Mammary epithelial cell (primary cell): ENCODE measurements at regions of chr4 and their contacts with region 1.

Region 1: DNA sequence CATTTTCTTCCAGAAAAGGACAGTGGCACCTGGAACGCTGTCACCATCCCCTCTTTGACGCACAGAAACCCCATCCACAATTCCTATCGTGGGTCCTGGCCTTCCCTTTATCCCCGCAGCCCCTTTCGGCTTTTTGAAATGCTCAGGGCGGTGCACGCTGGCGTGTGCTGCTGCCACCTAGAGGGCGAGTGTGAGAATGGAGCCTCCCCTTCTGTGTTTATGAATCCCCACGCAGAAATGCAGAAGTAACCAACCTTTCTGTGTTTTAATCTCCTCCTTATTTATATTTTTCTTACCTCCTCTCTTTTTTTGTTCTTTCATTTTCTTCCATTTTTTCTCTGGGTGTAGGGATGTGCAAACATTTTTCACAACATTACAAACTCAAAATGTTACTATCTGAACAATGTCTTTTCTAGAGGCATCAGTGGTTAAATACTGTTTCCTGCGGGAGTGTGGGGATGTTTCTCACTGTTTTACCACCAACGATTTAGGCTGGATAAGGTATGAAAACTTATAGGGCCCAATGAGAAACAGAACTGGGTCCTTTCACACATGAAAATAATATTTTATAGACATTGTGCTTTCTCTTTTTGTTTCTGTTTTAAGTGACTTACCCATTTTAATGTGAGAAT is 50.0 kb downstream of the TMA16 start:
- DNase-seq: no peak
- H3K4me3 ChIP-seq: peak overlapping the region in 2 of 3 experiments; percentile 15 to 45
- H3K27ac ChIP-seq: no peak overlapping the region
- H3K4me1 ChIP-seq: peaks cover 27% of the 10 kb centered on the region
- H3K27me3 ChIP-seq: no peaks in the 10 kb centered on the region
- CTCF ChIP-seq: peak; percentile 95 to 96

Region 2: DNA sequence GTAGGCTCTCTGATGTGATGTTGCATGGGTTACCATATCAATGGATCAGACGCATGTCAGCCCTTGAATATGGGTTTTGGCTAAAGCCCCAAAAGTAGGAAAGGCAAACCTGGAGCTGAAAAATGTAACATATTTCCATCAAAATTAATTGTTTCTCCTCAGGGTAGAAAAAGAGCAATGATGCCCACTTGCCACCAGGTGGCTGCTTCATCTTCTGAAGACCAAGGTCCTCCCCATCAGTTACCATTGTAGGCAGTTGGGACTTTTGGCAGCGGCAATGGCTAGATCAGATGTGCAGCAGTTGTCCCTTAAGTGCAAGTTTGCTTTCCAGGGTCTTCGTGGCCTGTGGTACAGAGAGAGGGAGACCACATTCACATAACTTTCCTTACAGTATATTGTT is 496.1 kb before region 1 on chr4:
- CTCF ChIA-PET with region 1: no interaction called
- dilution Hi-C with region 1: no loop called
- in situ Hi-C with region 1: no loop called
- intact Hi-C with region 1: loop called (anchors 5 kb)
- DNase-seq: peak; percentile 21
- H3K4me3 ChIP-seq: no peak overlapping the region
- H3K27ac ChIP-seq: no peak overlapping the region
- H3K4me1 ChIP-seq: no peaks in the 10 kb centered on the region
- H3K27me3 ChIP-seq: no peaks in the 10 kb centered on the region
- CTCF ChIP-seq: peak; percentile 59 to 72

Region 3: DNA sequence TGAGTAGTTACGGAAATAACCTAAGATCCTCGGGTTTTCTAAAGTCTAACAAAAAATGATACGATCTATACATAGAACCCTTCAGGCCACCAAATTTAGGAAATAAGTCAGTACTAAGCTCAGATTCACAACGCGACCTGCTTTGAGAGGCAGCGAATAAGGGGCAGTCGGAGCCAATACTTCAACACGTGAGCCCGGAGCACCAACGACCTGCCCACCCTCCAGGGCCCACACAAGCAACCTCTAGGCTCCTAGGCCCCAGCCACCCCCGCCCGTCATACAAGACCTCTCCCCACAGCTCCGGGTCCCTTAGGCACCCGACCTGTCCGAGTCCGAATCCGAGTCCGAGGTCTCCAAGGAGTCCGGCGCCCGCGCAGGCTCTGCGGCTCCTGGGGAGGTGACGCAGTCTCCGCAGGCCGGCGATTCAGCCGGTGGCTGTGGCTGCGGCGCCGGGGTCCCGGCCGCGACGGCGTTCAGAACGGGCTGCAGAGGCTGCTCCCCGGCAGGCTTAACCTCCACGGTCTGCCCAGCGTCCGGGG is 378.4 kb before region 1 on chr4:
- CTCF ChIA-PET with region 1: no interaction called
- dilution Hi-C with region 1: no loop called
- in situ Hi-C with region 1: no loop called
- intact Hi-C with region 1: loop called (anchors 10 kb)
- DNase-seq: peak; percentile 55
- H3K4me3 ChIP-seq: peak overlapping the region; percentile 87 to 93 (median 92)
- H3K27ac ChIP-seq: peak overlapping the region; percentile 84
- H3K4me1 ChIP-seq: peaks cover 6% of the 10 kb centered on the region
- H3K27me3 ChIP-seq: no peaks in the 10 kb centered on the region
- CTCF ChIP-seq: no peak

Region 4: DNA sequence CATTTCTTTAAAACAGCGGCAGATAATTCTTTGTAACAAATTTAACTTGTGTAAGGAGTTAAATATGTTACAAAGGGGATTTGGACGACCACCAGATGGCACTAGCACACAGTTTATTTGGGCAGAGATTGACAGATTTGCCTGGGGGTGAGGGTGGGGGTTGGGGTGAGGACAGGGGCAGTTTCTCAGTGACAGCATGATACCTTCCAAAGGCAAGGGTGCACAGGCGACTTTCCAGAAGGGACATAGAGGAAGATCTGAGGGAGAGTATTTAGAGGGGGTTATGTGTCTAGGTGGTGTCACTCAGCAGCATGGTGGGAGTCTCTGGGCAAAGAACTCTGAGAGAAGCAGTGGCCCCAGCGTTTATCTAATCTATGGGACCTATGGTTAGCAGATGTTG is 59.6 kb before region 1 on chr4:
- CTCF ChIA-PET with region 1: no interaction called
- dilution Hi-C with region 1: no loop called
- in situ Hi-C with region 1: loop called in 1 of 2 experiments (anchors 10 kb)
- intact Hi-C with region 1: loop called (anchors 1 kb)
- DNase-seq: peak; percentile 8
- H3K4me3 ChIP-seq: no peak overlapping the region
- H3K27ac ChIP-seq: no peak overlapping the region
- H3K4me1 ChIP-seq: no peaks in the 10 kb centered on the region
- H3K27me3 ChIP-seq: no peaks in the 10 kb centered on the region
- CTCF ChIP-seq: peak; percentile 50 to 54

Region 5: DNA sequence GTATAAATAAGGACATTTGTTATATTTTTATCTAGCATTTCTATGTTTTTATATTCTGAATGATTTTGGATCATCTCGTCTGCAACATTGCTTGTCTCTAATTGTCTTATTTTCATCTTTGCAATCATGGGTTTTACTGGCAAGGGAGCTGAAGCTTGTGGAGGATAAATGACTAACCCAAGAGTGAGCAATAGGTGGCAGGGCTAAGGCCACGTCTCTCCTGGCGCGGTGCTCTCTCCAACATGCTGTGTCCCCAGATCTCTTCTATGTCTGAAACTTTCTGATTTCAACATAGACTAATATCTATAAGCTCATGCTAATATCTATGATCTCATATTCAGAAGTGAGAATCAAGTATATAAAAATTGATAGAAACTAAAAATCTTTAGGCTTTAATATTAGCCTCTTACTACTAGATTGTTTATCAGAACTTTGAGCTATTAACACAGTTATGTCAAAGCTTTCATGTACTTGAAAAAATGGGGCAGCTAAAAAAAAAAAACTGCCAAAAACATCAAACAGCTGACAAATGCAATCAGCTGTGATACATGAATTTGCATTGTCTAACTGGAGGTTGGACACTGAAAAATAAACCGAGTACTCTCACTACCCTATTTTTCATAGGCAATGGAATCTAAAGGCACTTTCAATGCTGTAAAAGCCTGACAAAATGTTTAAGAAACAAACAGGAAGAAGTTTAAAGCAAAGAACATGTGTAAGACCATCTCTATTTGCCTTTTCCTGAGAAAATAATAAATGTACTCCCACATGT is 119.1 kb after region 1 on chr4:
- CTCF ChIA-PET with region 1: no interaction called
- dilution Hi-C with region 1: no loop called
- in situ Hi-C with region 1: no loop called
- intact Hi-C with region 1: no loop called
- DNase-seq: no peak
- H3K4me3 ChIP-seq: no peak overlapping the region
- H3K27ac ChIP-seq: no peak overlapping the region
- H3K4me1 ChIP-seq: no peaks in the 10 kb centered on the region
- H3K27me3 ChIP-seq: no peaks in the 10 kb centered on the region
- CTCF ChIP-seq: no peak

Region 6: GRCh38 chr4:164261831-164262230 is 717.3 kb after region 1 on chr4:
- CTCF ChIA-PET with region 1: no interaction called
- dilution Hi-C with region 1: no loop called
- in situ Hi-C with region 1: no loop called
- intact Hi-C with region 1: no loop called
- DNase-seq: no peak
- H3K4me3 ChIP-seq: no peak overlapping the region
- H3K27ac ChIP-seq: no peak overlapping the region
- H3K4me1 ChIP-seq: no peaks in the 10 kb centered on the region
- H3K27me3 ChIP-seq: no peaks in the 10 kb centered on the region
- CTCF ChIP-seq: no peak